CD4-positive, alpha-beta T cell (primary cell): ENCODE measurements at regions of chr12 and their contacts with region 1.

Region 1: GRCh38 chr12:54984658-54985376 is at the start of gene TESPA1:
- DNase-seq: peak; percentile 74 to 94 (median 84)
- ATAC-seq: peak; percentile 87
- H3K4me3 ChIP-seq: peak within 1 kb of the TSS; percentile 73
- H3K4me3 Mint-ChIP-seq: peak within 1 kb of the TSS; percentile 91
- H3K27ac ChIP-seq: peak within 1 kb of the TSS; percentile 88 to 97
- H3K27ac Mint-ChIP-seq: peak within 1 kb of the TSS; percentile 100
- H3K4me1 ChIP-seq: peaks cover 40% of the 10 kb centered on the region
- H3K4me1 Mint-ChIP-seq: peaks cover 98% of the 10 kb centered on the region
- H3K27me3 ChIP-seq: no peaks in the 10 kb centered on the region
- H3K27me3 Mint-ChIP-seq: no peaks in the 10 kb centered on the region
- CTCF ChIP-seq: no peak
- total RNA-seq, gene TESPA1: 96.3 to 98.2 TPM

Region 2: DNA sequence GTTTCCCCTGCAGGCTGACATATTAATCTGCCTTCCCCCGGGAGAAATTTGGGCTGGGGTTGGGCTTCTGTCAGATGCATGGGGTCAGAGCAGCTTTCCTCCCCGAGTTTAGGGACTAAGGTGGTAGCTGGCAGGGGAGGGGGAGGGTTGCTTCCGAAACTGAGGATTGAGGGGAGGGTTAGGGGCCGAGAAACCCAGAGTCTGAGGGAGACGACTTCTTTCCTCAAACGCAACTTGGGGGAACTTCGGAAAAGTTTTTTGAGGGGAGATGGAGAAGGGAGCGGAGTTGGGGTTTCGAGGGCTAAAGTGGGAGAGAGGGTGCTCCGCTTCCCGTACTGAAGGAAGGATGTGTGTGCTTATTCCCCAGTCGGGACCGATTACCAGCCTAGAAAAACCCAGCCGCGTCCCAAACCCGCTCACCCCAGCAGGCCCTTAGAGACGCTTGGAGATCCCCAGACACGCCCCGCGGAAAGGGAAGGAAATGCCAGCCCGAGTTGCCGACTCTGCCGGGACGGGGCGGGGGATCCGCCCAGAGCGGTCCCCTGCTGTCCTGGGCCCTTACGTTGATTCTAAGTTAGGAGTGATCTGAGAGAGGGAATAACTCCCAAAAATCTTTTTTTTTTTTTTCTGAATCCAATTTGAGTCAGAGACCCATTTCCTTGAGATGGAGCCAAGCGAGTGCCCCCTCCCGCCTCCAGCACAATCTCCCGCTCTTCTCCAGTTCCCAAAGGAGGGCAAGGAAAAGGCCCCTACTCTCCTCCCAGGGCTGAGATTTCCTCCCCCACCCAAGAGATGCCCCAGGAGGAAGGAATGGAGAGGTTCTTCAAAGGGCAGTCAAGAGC is 857.9 kb before region 1 on chr12:
- CTCF ChIA-PET with region 1: no interaction called
- POLR2A ChIA-PET with region 1: no interaction called
- intact Hi-C with region 1: no loop called
- DNase-seq: peak in 3 of 14 experiments; percentile 22 to 42 (median 40)
- ATAC-seq: no peak
- H3K4me3 ChIP-seq: no peak overlapping the region
- H3K4me3 Mint-ChIP-seq: peak overlapping the region; percentile 31
- H3K27ac ChIP-seq: no peak overlapping the region
- H3K27ac Mint-ChIP-seq: no peak overlapping the region
- H3K4me1 ChIP-seq: peaks cover 16% of the 10 kb centered on the region
- H3K4me1 Mint-ChIP-seq: peaks cover 16% of the 10 kb centered on the region
- H3K27me3 ChIP-seq: peaks cover 42 to 47% of the 10 kb centered on the region in 2 experiments
- H3K27me3 Mint-ChIP-seq: peaks cover 90% of the 10 kb centered on the region
- CTCF ChIP-seq: no peak

Region 3: DNA sequence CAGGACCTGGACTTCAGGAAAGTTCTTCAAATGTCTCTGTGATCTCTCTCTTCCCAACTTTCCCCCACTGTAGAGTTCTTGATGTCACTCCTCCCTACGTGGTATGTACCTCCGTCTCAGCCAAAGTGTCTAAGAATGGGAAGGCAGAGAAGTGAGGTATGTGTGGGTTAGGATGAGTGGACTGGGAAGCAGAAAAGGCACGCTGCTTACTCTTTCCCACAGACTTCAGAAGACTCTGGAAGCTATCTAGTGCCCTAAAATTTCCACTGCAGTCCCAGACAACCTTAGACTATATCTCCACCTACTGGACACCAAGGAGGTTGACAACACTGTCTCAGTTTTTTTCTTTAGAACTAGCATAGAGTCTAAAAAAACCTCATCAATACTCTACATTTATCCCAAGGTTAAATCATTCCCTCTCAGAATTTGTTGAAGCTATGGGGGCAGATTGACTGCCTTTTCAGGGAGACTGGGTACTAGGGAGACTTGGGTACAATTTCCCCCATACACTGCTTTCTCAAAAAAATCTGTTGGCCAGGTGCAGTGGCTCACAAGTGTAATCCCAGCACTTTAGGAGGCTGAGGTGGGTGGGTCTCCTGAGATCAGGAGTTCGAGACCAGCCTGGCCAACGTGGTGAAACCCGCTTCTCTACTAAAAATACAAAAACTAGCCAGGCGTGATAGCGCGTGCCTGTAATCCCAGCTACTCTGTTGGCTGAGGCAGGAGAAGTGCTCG is 545.1 kb before region 1 on chr12:
- CTCF ChIA-PET with region 1: no interaction called
- POLR2A ChIA-PET with region 1: no interaction called
- intact Hi-C with region 1: no loop called
- DNase-seq: peak in 3 of 14 experiments; percentile 61 to 76 (median 75)
- ATAC-seq: peak; percentile 97
- H3K4me3 ChIP-seq: no peak overlapping the region
- H3K4me3 Mint-ChIP-seq: no peak overlapping the region
- H3K27ac ChIP-seq: no peak overlapping the region
- H3K27ac Mint-ChIP-seq: no peak overlapping the region
- H3K4me1 ChIP-seq: peaks cover 4% of the 10 kb centered on the region
- H3K4me1 Mint-ChIP-seq: peaks cover 5% of the 10 kb centered on the region
- H3K27me3 ChIP-seq: no peaks in the 10 kb centered on the region
- H3K27me3 Mint-ChIP-seq: peaks cover 6% of the 10 kb centered on the region
- CTCF ChIP-seq: peak; percentile 87

Region 4: DNA sequence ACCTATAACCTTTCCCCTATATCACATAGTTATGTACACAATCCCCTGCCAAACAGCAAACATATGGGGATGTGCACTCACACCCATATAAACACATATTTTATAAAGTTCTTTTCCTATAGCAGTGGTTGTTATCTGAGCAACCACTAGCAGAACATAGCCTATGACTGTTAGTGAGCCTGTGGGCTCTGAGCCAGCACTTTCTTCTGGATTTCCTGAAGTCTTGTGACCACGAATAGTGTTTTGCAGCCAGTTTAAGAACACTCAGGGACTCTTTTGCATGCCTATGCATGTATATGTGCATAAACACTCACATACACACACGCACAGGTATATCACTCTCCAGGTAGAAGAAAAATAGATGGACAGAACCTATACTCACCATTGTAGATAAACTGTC is 17.4 kb before region 1 on chr12:
- CTCF ChIA-PET with region 1: interaction called, 24 read pairs
- POLR2A ChIA-PET with region 1: interaction called, 145 read pairs
- intact Hi-C with region 1: loop called (anchors 2 kb)
- DNase-seq: peak in 8 of 14 experiments; percentile 15 to 69 (median 36)
- ATAC-seq: peak; percentile 57
- H3K4me3 ChIP-seq: peak overlapping the region; percentile 8
- H3K4me3 Mint-ChIP-seq: peak overlapping the region; percentile 71
- H3K27ac ChIP-seq: peak overlapping the region in 1 of 2 donors; percentile 67
- H3K27ac Mint-ChIP-seq: peak overlapping the region; percentile 85
- H3K4me1 ChIP-seq: peaks cover 43% of the 10 kb centered on the region
- H3K4me1 Mint-ChIP-seq: peaks cover 87% of the 10 kb centered on the region
- H3K27me3 ChIP-seq: no peaks in the 10 kb centered on the region
- H3K27me3 Mint-ChIP-seq: no peaks in the 10 kb centered on the region
- CTCF ChIP-seq: no peak